ENCODE measurements at regions of chr3 and their contacts with region 1.

Region 1: GRCh38 chr3:100068826-100069225 is 45.5 kb downstream of the FILIP1L start:
- DNase-seq: peak; percentile 46 to 75 (median 54)
- H3K4me3 ChIP-seq: no peak overlapping the region
- H3K4me3 Mint-ChIP-seq: no peak overlapping the region
- H3K27ac ChIP-seq: no peak overlapping the region
- H3K27ac Mint-ChIP-seq: no peak overlapping the region
- H3K4me1 ChIP-seq: peaks cover 23% of the 10 kb centered on the region
- H3K4me1 Mint-ChIP-seq: peaks cover 24 to 35% (median 27%) of the 10 kb centered on the region in 3 donors
- H3K27me3 ChIP-seq: no peaks in the 10 kb centered on the region
- H3K27me3 Mint-ChIP-seq: no peaks in the 10 kb centered on the region

Region 2: GRCh38 chr3:100254168-100254777 is 185.4 kb after region 1 on chr3:
- CTCF ChIA-PET with region 1: interaction called, 14 read pairs
- POLR2A ChIA-PET with region 1: interaction called, 3 read pairs
- DNase-seq: peak in 3 of 5 donors; percentile 15 to 47 (median 25)
- H3K4me3 ChIP-seq: no peak overlapping the region
- H3K4me3 Mint-ChIP-seq: no peak overlapping the region
- H3K27ac ChIP-seq: no peak overlapping the region
- H3K27ac Mint-ChIP-seq: no peak overlapping the region
- H3K4me1 ChIP-seq: no peaks in the 10 kb centered on the region
- H3K4me1 Mint-ChIP-seq: peaks cover 0 to 8% (median under 1%) of the 10 kb centered on the region in 3 donors
- H3K27me3 ChIP-seq: no peaks in the 10 kb centered on the region
- H3K27me3 Mint-ChIP-seq: no peaks in the 10 kb centered on the region